Posterior vena cava (tissue), 2 donors: ENCODE measurements at regions of chr3 and their contacts with region 1.

Region 1: GRCh38 chr3:30649572-30650318 is 43.3 kb downstream of the TGFBR2 start:
- DNase-seq: no peak

Region 2: DNA sequence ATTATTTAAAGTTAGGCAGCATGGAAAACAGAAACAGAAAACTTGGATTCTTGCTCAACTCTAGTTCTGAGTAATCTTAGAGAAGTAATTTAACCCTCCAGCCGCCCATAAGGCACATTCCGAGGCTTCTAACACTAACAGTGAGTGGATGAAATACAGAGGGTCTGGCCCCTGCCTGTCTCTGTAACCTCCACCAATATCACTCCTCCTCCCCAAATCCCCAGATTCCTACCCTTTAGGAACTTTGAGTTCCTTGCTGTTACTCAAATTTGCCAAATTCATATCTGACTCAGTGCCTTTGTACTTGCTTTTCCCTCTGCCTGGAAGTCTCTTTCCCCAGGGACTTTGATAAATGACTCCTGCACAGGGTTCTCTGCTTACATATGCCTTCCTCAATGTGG is 155.8 kb before region 1 on chr3:
- intact Hi-C with region 1: no loop called
- DNase-seq: no peak

Region 3: GRCh38 chr3:30634761-30635735 is 14.7 kb before region 1 on chr3:
- intact Hi-C with region 1: loop called in 1 of 2 experiments (anchors 1 kb)
- DNase-seq: no peak